ENCODE measurements at regions of chr16 and their contacts with region 1.

Region 1: DNA sequence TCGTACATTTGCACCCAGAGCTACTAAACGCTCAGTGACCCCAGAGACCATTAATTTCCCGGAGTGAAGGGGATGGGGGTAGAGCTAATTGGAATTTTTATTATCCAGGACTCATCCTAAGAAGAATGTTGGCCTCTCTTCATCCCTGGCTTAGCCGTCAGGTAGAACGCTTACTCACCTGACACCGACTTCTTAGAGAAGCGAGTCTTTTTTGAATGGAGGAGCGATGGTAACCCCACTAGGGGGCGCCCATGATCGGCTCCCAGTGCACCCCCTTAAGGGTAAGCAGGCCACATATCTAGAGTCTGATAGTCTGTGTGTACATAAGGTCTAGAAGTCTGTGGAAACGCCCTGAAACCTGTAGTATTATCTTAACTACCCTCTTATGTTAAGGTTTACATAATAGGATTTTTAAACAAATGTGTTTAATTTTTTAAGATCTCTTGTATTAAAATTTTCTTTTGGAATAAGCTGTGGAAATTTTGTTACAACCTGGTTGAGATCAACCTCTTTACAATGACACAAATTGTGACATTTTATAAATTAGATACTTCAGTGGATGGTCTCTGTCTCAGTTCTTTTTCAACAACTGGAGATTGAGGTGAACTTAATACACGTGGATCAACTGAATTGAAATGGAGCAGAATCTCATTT is 229.8 kb downstream of the CPPED1 start:
- DNase-seq: no peak
- ATAC-seq: peak; percentile 81
- H3K4me3 ChIP-seq: no peak overlapping the region
- H3K27ac ChIP-seq: peak overlapping the region; percentile 35; the same call in 1 of the 2 replicates
- H3K4me1 ChIP-seq: peaks cover 9% of the 10 kb centered on the region
- H3K27me3 ChIP-seq: no peaks in the 10 kb centered on the region
- CTCF ChIP-seq: peak; percentile 55 to 70 (median 69)
- EP300 ChIP-seq: no peak
- POLR2A ChIP-seq: no peak
- RAD21 ChIP-seq: peak; percentile 82

Region 2: GRCh38 chr16:12356618-12357355 is 217.1 kb before region 1 on chr16:
- CTCF ChIA-PET with region 1: no interaction called
- POLR2A ChIA-PET with region 1: no interaction called
- RAD21 ChIA-PET with region 1: no interaction called
- SMC1A ChIA-PET with region 1: no interaction called
- in situ Hi-C with region 1: no loop called
- intact Hi-C with region 1: no loop called
- DNase-seq: no peak
- ATAC-seq: no peak
- H3K4me3 ChIP-seq: no peak overlapping the region
- H3K27ac ChIP-seq: no peak overlapping the region
- H3K4me1 ChIP-seq: no peaks in the 10 kb centered on the region
- H3K27me3 ChIP-seq: no peaks in the 10 kb centered on the region
- CTCF ChIP-seq: no peak
- EP300 ChIP-seq: no peak
- POLR2A ChIP-seq: no peak
- RAD21 ChIP-seq: no peak

Region 3: GRCh38 chr16:12455287-12455798 is 118.5 kb before region 1 on chr16:
- CTCF ChIA-PET with region 1: interaction called, 8 read pairs
- POLR2A ChIA-PET with region 1: no interaction called
- RAD21 ChIA-PET with region 1: interaction called, 7 read pairs
- SMC1A ChIA-PET with region 1: interaction called, 5 read pairs
- in situ Hi-C with region 1: no loop called
- intact Hi-C with region 1: loop called (anchors 5 kb)
- DNase-seq: no peak
- ATAC-seq: peak; percentile 90
- H3K4me3 ChIP-seq: no peak overlapping the region
- H3K27ac ChIP-seq: no peak overlapping the region
- H3K4me1 ChIP-seq: peaks cover 14% of the 10 kb centered on the region
- H3K27me3 ChIP-seq: no peaks in the 10 kb centered on the region
- CTCF ChIP-seq: peak; percentile 72 to 88 (median 83)
- EP300 ChIP-seq: no peak
- POLR2A ChIP-seq: no peak
- RAD21 ChIP-seq: peak; percentile 75

Region 4: DNA sequence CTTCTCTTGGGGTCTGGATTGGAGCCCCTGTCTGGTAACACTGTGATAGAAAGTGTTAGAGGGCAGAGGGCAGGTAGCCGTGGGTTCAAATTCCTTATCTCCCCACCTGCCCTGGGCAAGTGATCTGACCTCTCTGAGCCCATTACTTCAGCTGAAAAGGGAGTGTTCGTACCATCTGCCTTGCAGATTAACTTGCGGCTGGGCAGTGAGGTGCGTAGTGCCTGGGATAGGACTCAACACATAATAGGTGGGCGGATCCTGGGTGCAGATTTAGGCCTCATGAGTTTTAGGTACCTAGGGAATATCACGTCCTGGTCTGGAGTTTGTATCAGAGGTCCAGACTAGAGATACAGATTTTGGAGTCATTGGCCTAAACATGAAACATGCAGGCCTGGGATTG is 99.8 kb before region 1 on chr16:
- CTCF ChIA-PET with region 1: no interaction called
- POLR2A ChIA-PET with region 1: no interaction called
- RAD21 ChIA-PET with region 1: no interaction called
- SMC1A ChIA-PET with region 1: no interaction called
- in situ Hi-C with region 1: no loop called
- intact Hi-C with region 1: no loop called
- DNase-seq: no peak
- ATAC-seq: no peak
- H3K4me3 ChIP-seq: no peak overlapping the region
- H3K27ac ChIP-seq: no peak overlapping the region
- H3K4me1 ChIP-seq: no peaks in the 10 kb centered on the region
- H3K27me3 ChIP-seq: no peaks in the 10 kb centered on the region
- CTCF ChIP-seq: no peak
- EP300 ChIP-seq: no peak
- POLR2A ChIP-seq: no peak
- RAD21 ChIP-seq: no peak

Region 5: GRCh38 chr16:12546918-12547607 is 26.8 kb before region 1 on chr16:
- CTCF ChIA-PET with region 1: interaction called, 15 read pairs
- POLR2A ChIA-PET with region 1: interaction called, 3 read pairs
- RAD21 ChIA-PET with region 1: interaction called, 27 read pairs
- SMC1A ChIA-PET with region 1: interaction called, 47 read pairs
- in situ Hi-C with region 1: no loop called
- intact Hi-C with region 1: no loop called
- DNase-seq: peak; percentile 89
- ATAC-seq: peak; percentile 68
- H3K4me3 ChIP-seq: peak overlapping the region; percentile 47
- H3K27ac ChIP-seq: peak overlapping the region; percentile 89
- H3K4me1 ChIP-seq: peaks cover 72% of the 10 kb centered on the region
- H3K27me3 ChIP-seq: no peaks in the 10 kb centered on the region
- CTCF ChIP-seq: no peak
- EP300 ChIP-seq: peak; percentile 92 to 95
- POLR2A ChIP-seq: no peak
- RAD21 ChIP-seq: no peak

Region 6: GRCh38 chr16:12613131-12613991 is 39.5 kb after region 1 on chr16:
- CTCF ChIA-PET with region 1: interaction called, 10 read pairs
- POLR2A ChIA-PET with region 1: interaction called, 3 read pairs
- RAD21 ChIA-PET with region 1: interaction called, 6 read pairs
- SMC1A ChIA-PET with region 1: interaction called, 8 read pairs
- in situ Hi-C with region 1: no loop called
- intact Hi-C with region 1: no loop called
- DNase-seq: peak; percentile 76
- ATAC-seq: peak; percentile 88
- H3K4me3 ChIP-seq: no peak overlapping the region
- H3K27ac ChIP-seq: no peak overlapping the region
- H3K4me1 ChIP-seq: peaks cover 17% of the 10 kb centered on the region
- H3K27me3 ChIP-seq: no peaks in the 10 kb centered on the region
- CTCF ChIP-seq: no peak
- EP300 ChIP-seq: peak; percentile 64 to 90; a peak in 3 of 4 replicates
- POLR2A ChIP-seq: no peak
- RAD21 ChIP-seq: no peak

Region 7: DNA sequence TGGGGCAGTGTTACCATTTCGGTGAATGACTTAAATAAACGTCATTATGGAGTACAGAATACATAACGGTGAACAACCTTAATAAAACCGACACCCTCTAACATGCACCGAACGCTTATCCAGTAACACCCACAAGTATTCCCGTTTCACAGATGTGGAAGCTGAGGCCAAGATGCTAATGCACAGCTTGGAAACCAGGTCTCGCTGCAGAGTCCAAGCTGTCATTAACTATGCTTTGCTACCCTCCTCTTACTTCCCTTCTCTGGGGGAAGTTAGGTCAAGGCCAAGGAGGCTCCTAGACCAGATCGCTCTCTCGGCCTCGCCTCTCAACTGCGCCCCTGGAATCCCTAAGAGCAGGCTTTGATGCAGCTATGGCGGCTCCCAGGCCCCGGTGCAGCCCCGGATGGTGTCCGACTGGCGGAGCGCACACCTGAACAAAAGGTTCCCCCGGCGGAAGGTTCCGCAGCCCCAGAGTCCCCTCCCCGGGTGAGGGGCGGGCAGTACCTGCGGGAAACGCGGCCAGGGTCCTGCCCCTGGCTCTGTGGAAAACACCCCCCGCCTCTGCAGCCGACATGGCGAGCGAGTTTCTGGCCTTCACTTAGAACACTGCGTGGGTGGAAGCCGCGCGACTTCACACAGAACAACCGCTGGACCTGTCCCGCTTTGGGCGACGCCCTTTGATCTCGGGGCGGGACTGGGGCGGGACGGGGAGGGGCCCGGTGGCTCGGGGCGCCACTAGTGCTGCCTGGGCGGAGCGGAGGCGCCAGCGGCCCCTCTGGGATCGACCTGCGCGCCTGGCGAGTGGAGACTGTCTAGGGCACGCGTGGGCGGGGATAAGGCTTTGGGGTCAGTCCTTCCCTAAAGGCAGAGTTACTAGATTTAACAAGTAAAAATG is 229.6 kb after region 1 on chr16 and contains the start of gene CPPED1:
- CTCF ChIA-PET with region 1: interaction called, 5 read pairs
- POLR2A ChIA-PET with region 1: no interaction called
- RAD21 ChIA-PET with region 1: interaction called, 4 read pairs
- SMC1A ChIA-PET with region 1: no interaction called
- in situ Hi-C with region 1: no loop called
- intact Hi-C with region 1: loop called (anchors 5 kb)
- DNase-seq: peak; percentile 72
- ATAC-seq: peak; percentile 89
- H3K4me3 ChIP-seq: peak within 1 kb of the TSS; percentile 88
- H3K27ac ChIP-seq: peak within 1 kb of the TSS; percentile 81
- H3K4me1 ChIP-seq: peaks cover 22% of the 10 kb centered on the region
- H3K27me3 ChIP-seq: no peaks in the 10 kb centered on the region
- CTCF ChIP-seq: no peak; a peak in 1 of 6 replicates
- EP300 ChIP-seq: peak in 1 of 2 experiments; percentile 24; a peak in 1 of 4 replicates
- POLR2A ChIP-seq: peak; percentile 97
- RAD21 ChIP-seq: no peak
- polyA plus RNA-seq, gene CPPED1: 11.4 to 12.3 TPM

Region 8: GRCh38 chr16:12896562-12896961 is 322.7 kb after region 1 on chr16:
- CTCF ChIA-PET with region 1: interaction called, 4 read pairs
- POLR2A ChIA-PET with region 1: no interaction called
- RAD21 ChIA-PET with region 1: interaction called, 7 read pairs
- SMC1A ChIA-PET with region 1: interaction called, 6 read pairs
- in situ Hi-C with region 1: no loop called
- intact Hi-C with region 1: loop called (anchors 10 kb)
- DNase-seq: no peak
- ATAC-seq: peak; percentile 89
- H3K4me3 ChIP-seq: no peak overlapping the region
- H3K27ac ChIP-seq: no peak overlapping the region
- H3K4me1 ChIP-seq: no peaks in the 10 kb centered on the region
- H3K27me3 ChIP-seq: peaks cover 0 to 9% of the 10 kb centered on the region in 2 experiments; a peak in 3 of 4 replicates
- CTCF ChIP-seq: peak; percentile 61 to 63 (median 63)
- EP300 ChIP-seq: no peak
- POLR2A ChIP-seq: no peak
- RAD21 ChIP-seq: peak; percentile 88

Measured in GM12878 (cell line).